Right ventricle myocardium superior (tissue), 1 donor: ENCODE measurements at regions of chr16 and their contacts with region 1.

Region 1: DNA sequence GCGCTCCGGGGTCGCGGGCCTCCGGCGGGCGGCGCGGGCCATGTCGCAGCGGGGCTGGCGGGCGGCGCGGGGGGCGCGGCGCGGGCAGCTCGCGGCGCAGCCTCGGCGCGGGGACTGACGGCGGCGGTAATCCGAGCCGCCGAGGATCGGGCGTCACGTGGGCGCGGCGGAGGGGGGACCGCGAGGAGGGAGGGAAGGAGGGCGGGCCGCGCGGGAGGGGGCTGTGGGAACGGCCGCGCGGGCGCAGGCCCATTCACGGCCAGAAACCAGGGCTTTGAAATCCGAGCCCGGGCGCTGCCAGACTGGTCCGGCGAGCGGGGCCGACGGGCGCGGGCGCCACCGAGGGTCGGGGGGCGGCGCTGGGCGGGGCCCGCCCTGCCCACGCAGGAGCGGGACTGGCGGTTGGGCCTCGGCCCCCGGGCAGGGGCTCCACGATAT is at the start of gene MTSS2:
- DNase-seq: peak; percentile 90
- ATAC-seq: peak; percentile 71
- total RNA-seq, gene MTSS2: 74.1 TPM

Region 2: DNA sequence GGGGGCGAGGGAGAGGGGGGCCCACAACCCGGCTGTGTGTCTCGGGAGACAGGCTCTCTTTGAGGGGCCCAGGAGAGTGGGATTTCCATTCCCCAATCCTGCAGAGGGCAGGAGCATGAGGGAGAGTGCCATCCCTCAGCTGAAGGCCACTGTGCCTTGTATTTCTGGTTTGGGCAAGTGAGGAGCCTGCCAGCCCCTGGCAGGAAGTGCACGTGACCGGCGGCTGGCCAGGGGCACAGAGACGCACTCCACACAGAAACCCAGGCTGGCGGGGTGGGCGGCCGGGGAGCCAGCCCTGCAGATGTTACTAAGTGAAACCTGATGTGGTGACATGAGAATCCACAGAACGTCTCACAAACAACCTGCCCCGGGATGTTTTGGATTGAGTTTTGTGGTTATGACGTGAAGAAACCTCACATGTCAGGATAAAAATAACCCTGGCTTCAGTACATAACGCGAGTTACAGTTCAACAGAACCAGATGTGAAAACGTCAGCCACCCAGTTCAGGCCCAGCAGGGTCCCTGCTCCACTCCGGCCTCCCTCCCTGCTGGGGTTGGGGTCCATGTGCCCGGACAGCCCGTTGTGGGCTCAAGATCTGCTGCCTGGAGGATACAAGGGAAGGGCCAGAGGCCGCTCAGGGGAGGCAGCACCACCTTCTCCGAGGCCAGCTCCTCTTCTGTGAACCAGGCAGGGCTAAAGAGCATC is 51.6 kb after region 1 on chr16:
- intact Hi-C with region 1: loop called (anchors 5 kb)
- DNase-seq: peak; percentile 86
- ATAC-seq: peak; percentile 81